Activated CD4-positive, alpha-beta memory T cell treated with anti-CD3 and anti-CD28 coated beads for 36 hours (primary cell): ENCODE measurements at regions of chr12 and their contacts with region 1.

Region 1: DNA sequence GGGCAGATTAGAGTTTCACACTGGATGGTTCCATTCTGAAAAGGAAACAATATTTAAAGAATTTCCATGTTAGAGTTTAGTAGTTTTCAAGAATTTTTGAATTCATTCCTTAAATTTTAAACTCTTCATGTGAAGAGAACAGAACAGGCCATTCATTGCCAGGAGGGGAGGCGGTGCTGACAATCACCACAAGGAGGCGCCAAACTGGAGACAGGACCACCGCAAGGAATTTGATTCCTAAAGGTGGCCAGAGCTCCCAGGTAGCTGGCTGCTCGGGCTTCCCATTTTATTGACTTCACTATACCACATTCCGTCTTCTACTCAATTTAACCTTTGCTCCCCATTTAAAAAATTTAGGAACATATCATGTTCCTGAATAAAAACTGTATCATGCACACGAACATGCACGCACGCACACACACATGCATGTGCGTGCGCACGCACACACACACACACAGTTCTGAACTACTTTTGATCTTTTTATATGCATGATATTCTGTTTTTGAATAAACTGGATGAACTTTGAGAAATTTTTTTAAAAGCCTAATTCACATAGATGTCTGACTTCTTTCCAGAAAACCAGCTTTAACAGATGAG is 101.2 kb downstream of the NELL2 start:
- DNase-seq: peak; percentile 71
- H3K4me3 Mint-ChIP-seq: no peak overlapping the region
- H3K27ac Mint-ChIP-seq: no peak overlapping the region
- H3K4me1 Mint-ChIP-seq: peaks cover 5% of the 10 kb centered on the region
- H3K27me3 Mint-ChIP-seq: no peaks in the 10 kb centered on the region

Region 2: GRCh38 chr12:43957732-43958372 is 817.1 kb before region 1 on chr12:
- CTCF ChIA-PET with region 1: no interaction called
- POLR2A ChIA-PET with region 1: no interaction called
- intact Hi-C with region 1: loop called (anchors 5 kb)
- DNase-seq: peak; percentile 10
- H3K4me3 Mint-ChIP-seq: no peak overlapping the region
- H3K27ac Mint-ChIP-seq: no peak overlapping the region
- H3K4me1 Mint-ChIP-seq: peaks cover 10% of the 10 kb centered on the region
- H3K27me3 Mint-ChIP-seq: no peaks in the 10 kb centered on the region

Region 3: DNA sequence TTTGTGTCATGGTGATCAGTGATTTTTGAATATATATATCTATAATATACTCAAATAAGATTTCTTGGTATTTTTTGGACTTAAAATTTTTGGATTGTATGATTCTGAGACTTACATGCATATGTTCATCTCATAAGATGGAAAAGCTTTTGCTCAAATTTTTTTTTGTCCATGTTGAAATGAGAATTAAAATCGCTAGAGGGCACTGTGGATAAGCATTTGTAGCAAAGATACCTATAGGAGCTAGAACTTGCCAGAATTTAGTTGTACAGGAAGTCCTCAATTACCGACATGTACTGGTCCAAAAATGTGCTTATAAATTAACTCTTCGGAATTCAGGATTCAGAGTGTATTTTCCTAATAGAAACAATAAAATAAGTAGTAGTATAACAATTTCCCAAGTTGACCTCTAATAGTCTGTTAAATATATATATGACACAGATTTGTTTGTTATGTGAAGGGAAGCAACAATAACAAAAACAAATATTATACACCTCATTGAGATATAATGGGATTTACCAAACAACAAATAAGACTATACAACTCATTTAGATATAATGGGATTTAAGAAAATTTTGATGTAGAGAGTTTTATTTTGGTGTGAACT is 759.5 kb before region 1 on chr12:
- CTCF ChIA-PET with region 1: interaction called, 5 read pairs
- POLR2A ChIA-PET with region 1: no interaction called
- intact Hi-C with region 1: loop called (anchors 10 kb)
- DNase-seq: no peak
- H3K4me3 Mint-ChIP-seq: no peak overlapping the region
- H3K27ac Mint-ChIP-seq: no peak overlapping the region
- H3K4me1 Mint-ChIP-seq: no peaks in the 10 kb centered on the region
- H3K27me3 Mint-ChIP-seq: no peaks in the 10 kb centered on the region

Region 4: GRCh38 chr12:44696542-44696941 is 78.4 kb before region 1 on chr12:
- CTCF ChIA-PET with region 1: no interaction called
- POLR2A ChIA-PET with region 1: no interaction called
- intact Hi-C with region 1: no loop called
- DNase-seq: no peak
- H3K4me3 Mint-ChIP-seq: no peak overlapping the region
- H3K27ac Mint-ChIP-seq: no peak overlapping the region
- H3K4me1 Mint-ChIP-seq: peaks cover 6% of the 10 kb centered on the region
- H3K27me3 Mint-ChIP-seq: no peaks in the 10 kb centered on the region

Region 5: GRCh38 chr12:44788731-44789130 is 13.8 kb after region 1 on chr12:
- CTCF ChIA-PET with region 1: interaction called, 12 read pairs
- POLR2A ChIA-PET with region 1: no interaction called
- intact Hi-C with region 1: no loop called
- DNase-seq: no peak
- H3K4me3 Mint-ChIP-seq: no peak overlapping the region
- H3K27ac Mint-ChIP-seq: no peak overlapping the region
- H3K4me1 Mint-ChIP-seq: peaks cover 10% of the 10 kb centered on the region
- H3K27me3 Mint-ChIP-seq: no peaks in the 10 kb centered on the region

Region 6: GRCh38 chr12:44812062-44812461 is 37.1 kb after region 1 on chr12:
- CTCF ChIA-PET with region 1: interaction called, 14 read pairs
- POLR2A ChIA-PET with region 1: no interaction called
- intact Hi-C with region 1: no loop called
- DNase-seq: no peak
- H3K4me3 Mint-ChIP-seq: no peak overlapping the region
- H3K27ac Mint-ChIP-seq: no peak overlapping the region
- H3K4me1 Mint-ChIP-seq: peaks cover 35% of the 10 kb centered on the region
- H3K27me3 Mint-ChIP-seq: no peaks in the 10 kb centered on the region